CD14-positive monocyte (primary cell): ENCODE measurements at regions of chr10 and their contacts with region 1.

Region 1: DNA sequence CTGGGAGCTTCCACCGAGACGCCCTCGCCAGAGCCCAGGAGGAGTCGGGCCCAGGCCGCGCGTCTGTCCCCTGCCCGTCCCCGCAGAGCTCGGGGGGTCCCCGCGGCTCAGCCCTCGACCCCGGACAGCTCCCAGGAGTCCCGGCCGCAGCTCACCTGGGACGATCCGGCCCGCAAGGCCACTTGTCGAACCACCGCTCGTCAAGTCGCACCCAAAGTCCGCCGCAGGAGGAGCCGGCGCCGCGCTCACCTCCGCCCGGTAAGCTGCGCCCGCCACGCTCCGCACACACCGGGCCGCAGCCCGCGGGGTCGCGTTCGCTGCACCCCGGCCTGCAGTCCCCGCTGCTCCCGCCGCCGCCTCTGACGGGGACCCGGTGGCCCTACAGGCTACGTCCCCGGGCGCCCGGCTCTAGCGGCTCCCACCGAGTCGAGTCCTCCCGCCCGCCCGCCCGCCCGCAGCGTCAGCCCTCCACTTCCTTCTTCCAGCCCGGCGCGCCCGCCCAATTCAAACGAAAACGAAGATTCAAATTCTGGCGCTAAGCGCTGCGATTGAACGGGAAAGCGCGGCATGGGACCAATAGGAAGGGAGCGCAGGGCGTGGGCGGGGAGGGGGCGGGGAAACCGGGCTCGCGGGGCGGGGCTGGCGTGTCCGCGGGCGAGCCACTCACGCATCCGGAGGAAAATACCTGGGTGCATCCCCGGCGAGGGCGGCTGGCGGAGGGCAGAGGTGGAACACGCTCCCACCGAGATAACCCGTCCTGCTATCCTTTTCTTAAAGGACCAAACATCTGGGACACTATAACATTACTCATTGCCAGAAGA is at the start of gene MKI67:
- DNase-seq: peak; percentile 93 to 95 (median 93)
- H3K4me3 ChIP-seq: peak within 1 kb of the TSS; percentile 62 to 89 (median 64)
- H3K4me3 Mint-ChIP-seq: peak within 1 kb of the TSS; percentile 97
- H3K27ac ChIP-seq: peak within 1 kb of the TSS in 1 of 2 donors; percentile 38
- H3K27ac Mint-ChIP-seq: peak within 1 kb of the TSS in 6 of 7 donors; percentile 56 to 86 (median 80)
- H3K4me1 ChIP-seq: peaks cover 46 to 50% of the 10 kb centered on the region in 2 donors
- H3K4me1 Mint-ChIP-seq: peaks cover 47% of the 10 kb centered on the region
- H3K27me3 ChIP-seq: no peaks in the 10 kb centered on the region
- H3K27me3 Mint-ChIP-seq: peaks cover 0 to 3% (median 0%) of the 10 kb centered on the region in 3 donors
- CTCF ChIP-seq: no peak
- polyA plus RNA-seq, gene MKI67: 0.02 to 0.05 TPM in 2 of 3 donors, not detected in the other

Region 2: GRCh38 chr10:128047351-128047750 is 78.8 kb before region 1 on chr10:
- intact Hi-C with region 1: loop called in 1 of 2 experiments (anchors 5 kb)
- DNase-seq: peak; percentile 92
- H3K4me3 ChIP-seq: peak overlapping the region; percentile 77 to 100 (median 95)
- H3K4me3 Mint-ChIP-seq: peak overlapping the region; percentile 96 to 99
- H3K27ac ChIP-seq: peak overlapping the region; percentile 94 to 98
- H3K27ac Mint-ChIP-seq: peak overlapping the region; percentile 97 to 100 (median 98)
- H3K4me1 ChIP-seq: peaks cover 61 to 73% of the 10 kb centered on the region in 2 donors
- H3K4me1 Mint-ChIP-seq: peaks cover 60% of the 10 kb centered on the region
- H3K27me3 ChIP-seq: no peaks in the 10 kb centered on the region
- H3K27me3 Mint-ChIP-seq: peaks cover 0 to 12% (median 0%) of the 10 kb centered on the region in 3 donors
- CTCF ChIP-seq: no peak

Region 3: DNA sequence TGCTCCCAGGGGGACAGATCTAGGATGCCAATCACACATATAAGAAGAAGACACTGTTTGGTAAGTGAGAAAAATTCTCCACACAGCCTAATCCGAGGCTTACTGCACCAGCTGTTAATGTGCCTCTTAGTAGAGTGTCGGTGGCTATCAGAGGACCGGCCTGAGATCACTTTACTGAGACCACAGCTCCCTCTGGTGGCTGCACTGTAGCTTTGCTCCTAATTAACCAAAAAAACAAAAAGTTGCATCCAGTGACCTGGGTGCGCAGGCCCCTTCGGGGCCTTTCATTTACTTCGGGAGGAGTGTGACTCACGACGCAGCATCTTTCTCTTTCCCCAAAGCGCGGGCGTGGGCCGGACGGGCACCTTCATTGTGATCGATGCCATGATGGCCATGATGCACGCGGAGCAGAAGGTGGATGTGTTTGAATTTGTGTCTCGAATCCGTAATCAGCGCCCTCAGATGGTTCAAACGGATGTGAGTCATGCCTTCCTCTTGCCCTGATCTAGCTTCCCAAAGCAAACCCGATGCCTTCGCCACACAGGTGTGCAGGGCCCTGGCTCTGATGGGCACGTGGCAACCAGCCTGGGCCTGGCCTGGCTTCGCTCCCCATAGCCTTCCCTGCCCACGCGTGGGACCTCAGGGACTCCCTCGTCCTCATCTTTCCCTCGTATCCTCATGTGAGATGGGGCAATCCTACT is 56.7 kb before region 1 on chr10:
- intact Hi-C with region 1: loop called in 1 of 2 experiments (anchors 10 kb)
- DNase-seq: peak; percentile 77 to 81 (median 80)
- H3K4me3 ChIP-seq: no peak overlapping the region
- H3K4me3 Mint-ChIP-seq: no peak overlapping the region
- H3K27ac ChIP-seq: peak overlapping the region in 1 of 2 donors; percentile 33
- H3K27ac Mint-ChIP-seq: peak overlapping the region; percentile 64 to 92 (median 83)
- H3K4me1 ChIP-seq: peaks cover 17 to 29% of the 10 kb centered on the region in 2 donors
- H3K4me1 Mint-ChIP-seq: peaks cover 31% of the 10 kb centered on the region
- H3K27me3 ChIP-seq: no peaks in the 10 kb centered on the region
- H3K27me3 Mint-ChIP-seq: peaks cover 0 to 5% (median 3%) of the 10 kb centered on the region in 3 donors
- CTCF ChIP-seq: peak; percentile 84

Region 4: GRCh38 chr10:128209862-128210214 is 83.7 kb after region 1 on chr10:
- intact Hi-C with region 1: loop called in 1 of 2 experiments (anchors 10 kb)
- DNase-seq: no peak
- H3K4me3 ChIP-seq: peak overlapping the region in 1 of 3 experiments; percentile 87
- H3K4me3 Mint-ChIP-seq: peak overlapping the region; percentile 51 to 73
- H3K27ac ChIP-seq: no peak overlapping the region
- H3K27ac Mint-ChIP-seq: no peak overlapping the region
- H3K4me1 ChIP-seq: peaks cover 13 to 16% of the 10 kb centered on the region in 2 donors
- H3K4me1 Mint-ChIP-seq: peaks cover 13% of the 10 kb centered on the region
- H3K27me3 ChIP-seq: no peaks in the 10 kb centered on the region
- H3K27me3 Mint-ChIP-seq: peaks cover 6 to 25% (median 21%) of the 10 kb centered on the region in 3 donors
- CTCF ChIP-seq: no peak

Region 5: GRCh38 chr10:129466703-129467358 is 1340.7 kb after region 1 on chr10 and contains the start of gene MGMT:
- intact Hi-C with region 1: loop called in 1 of 2 experiments (anchors 10 kb)
- DNase-seq: peak; percentile 82 to 87 (median 86)
- H3K4me3 ChIP-seq: peak within 1 kb of the TSS; percentile 77 to 85 (median 80)
- H3K4me3 Mint-ChIP-seq: peak within 1 kb of the TSS; percentile 73 to 75
- H3K27ac ChIP-seq: peak within 1 kb of the TSS in 1 of 2 donors; percentile 70
- H3K27ac Mint-ChIP-seq: peak within 1 kb of the TSS in 3 of 7 donors; percentile 37 to 85 (median 63)
- H3K4me1 ChIP-seq: peaks cover 12 to 18% of the 10 kb centered on the region in 2 donors
- H3K4me1 Mint-ChIP-seq: peaks cover 6% of the 10 kb centered on the region
- H3K27me3 ChIP-seq: no peaks in the 10 kb centered on the region
- H3K27me3 Mint-ChIP-seq: peaks cover 0 to 6% (median 3%) of the 10 kb centered on the region in 3 donors
- CTCF ChIP-seq: no peak
- polyA plus RNA-seq, gene MGMT: 9.5 to 23.5 (median 17.5) TPM